Activated CD4-positive, alpha-beta memory T cell treated with anti-CD3 and anti-CD28 coated beads for 36 hours (primary cell): ENCODE measurements at regions of chrX and their contacts with region 1.

Region 1: GRCh38 chrX:129781134-129781672 is 1.5 kb downstream of the SASH3 start:
- DNase-seq: peak; percentile 92
- H3K4me3 Mint-ChIP-seq: peak overlapping the region; percentile 79
- H3K27ac Mint-ChIP-seq: peak overlapping the region; percentile 97
- H3K4me1 Mint-ChIP-seq: peaks cover 53% of the 10 kb centered on the region
- H3K27me3 Mint-ChIP-seq: no peaks in the 10 kb centered on the region

Region 2: GRCh38 chrX:129754056-129755024 is 26.9 kb before region 1 on chrX:
- CTCF ChIA-PET with region 1: interaction called, 40 read pairs
- POLR2A ChIA-PET with region 1: interaction called, 58 read pairs
- intact Hi-C with region 1: loop called (anchors 1 kb)
- DNase-seq: peak; percentile 46
- H3K4me3 Mint-ChIP-seq: no peak overlapping the region
- H3K27ac Mint-ChIP-seq: no peak overlapping the region
- H3K4me1 Mint-ChIP-seq: peaks cover 39% of the 10 kb centered on the region
- H3K27me3 Mint-ChIP-seq: no peaks in the 10 kb centered on the region

Region 3: DNA sequence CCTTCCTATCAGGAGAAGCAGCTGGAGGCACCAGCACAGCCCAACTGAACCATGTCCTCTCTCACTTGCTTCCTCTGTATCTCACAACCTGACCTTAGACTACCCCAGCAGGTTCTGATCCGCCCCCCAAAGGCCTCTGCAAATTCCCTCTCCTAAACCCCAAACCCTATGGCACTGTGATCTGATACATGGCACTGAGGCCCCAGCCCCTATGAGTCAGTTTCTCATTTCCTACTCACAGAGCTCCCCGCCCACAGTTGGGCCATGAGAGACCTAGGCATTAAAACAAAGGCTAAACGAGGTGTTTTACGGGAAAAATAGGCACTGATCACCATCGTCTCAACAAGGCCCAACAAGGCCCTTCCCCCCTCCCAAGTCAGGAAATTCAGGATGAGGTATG is 17.7 kb after region 1 on chrX:
- CTCF ChIA-PET with region 1: no interaction called
- POLR2A ChIA-PET with region 1: interaction called, 8 read pairs
- intact Hi-C with region 1: loop called (anchors 2 kb)
- DNase-seq: peak; percentile 67
- H3K4me3 Mint-ChIP-seq: no peak overlapping the region
- H3K27ac Mint-ChIP-seq: peak overlapping the region; percentile 82
- H3K4me1 Mint-ChIP-seq: peaks cover 28% of the 10 kb centered on the region
- H3K27me3 Mint-ChIP-seq: no peaks in the 10 kb centered on the region

Region 4: DNA sequence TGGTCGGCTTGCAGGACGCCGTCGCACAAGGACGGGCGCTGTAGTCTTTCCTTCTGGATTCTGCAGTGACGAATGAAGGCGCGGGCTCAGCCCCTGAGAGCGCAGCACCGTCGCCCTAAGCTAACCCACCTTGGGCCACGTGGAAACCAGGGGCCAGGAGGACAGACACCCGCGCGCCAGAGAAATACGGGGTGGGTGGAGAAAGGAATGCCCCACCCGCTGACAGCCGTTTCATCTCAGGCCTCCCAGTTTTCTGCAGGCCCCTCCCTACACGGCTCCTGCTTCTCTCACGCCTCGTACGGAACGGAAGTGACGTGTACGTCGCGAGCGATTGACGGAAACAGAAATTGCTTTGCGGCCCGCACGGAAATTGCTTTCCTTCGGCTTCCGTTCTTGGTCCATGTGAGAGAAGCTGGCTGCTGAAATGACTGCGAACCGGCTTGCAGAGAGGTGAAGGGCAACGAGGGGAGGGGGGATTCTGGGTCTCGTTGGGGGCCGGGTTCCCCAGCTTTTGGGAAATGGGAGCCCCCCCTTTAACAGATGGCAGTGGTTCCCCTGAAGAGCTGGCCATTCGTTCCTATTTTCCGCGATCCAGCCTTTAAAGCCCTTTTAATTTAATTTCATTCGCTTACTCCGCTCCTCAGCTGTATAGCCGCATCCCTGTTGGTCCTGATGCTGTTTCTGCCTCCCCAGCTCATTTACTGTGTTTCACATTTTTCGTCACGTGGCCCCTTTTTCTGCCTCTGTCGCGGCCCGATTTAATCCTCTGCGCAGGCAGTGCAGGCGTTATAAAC is 124.8 kb after region 1 on chrX and contains the start of gene UTP14A:
- CTCF ChIA-PET with region 1: no interaction called
- POLR2A ChIA-PET with region 1: no interaction called
- intact Hi-C with region 1: loop called (anchors 2 kb)
- DNase-seq: peak; percentile 92
- H3K4me3 Mint-ChIP-seq: peak within 1 kb of the TSS; percentile 88
- H3K27ac Mint-ChIP-seq: peak within 1 kb of the TSS; percentile 88
- H3K4me1 Mint-ChIP-seq: peaks cover 23% of the 10 kb centered on the region
- H3K27me3 Mint-ChIP-seq: no peaks in the 10 kb centered on the region
- total RNA-seq, gene UTP14A: 29.9 to 31.7 TPM

Region 5: GRCh38 chrX:129982274-129983251 is 201.4 kb after region 1 on chrX and contains the start of gene BCORL1:
- CTCF ChIA-PET with region 1: no interaction called
- POLR2A ChIA-PET with region 1: no interaction called
- intact Hi-C with region 1: loop called (anchors 5 kb)
- DNase-seq: peak; percentile 93
- H3K4me3 Mint-ChIP-seq: no peak within 1 kb of the TSS
- H3K27ac Mint-ChIP-seq: no peak within 1 kb of the TSS
- H3K4me1 Mint-ChIP-seq: peaks cover 17% of the 10 kb centered on the region
- H3K27me3 Mint-ChIP-seq: no peaks in the 10 kb centered on the region
- total RNA-seq, gene BCORL1: 9.2 to 10.5 TPM

Region 6: GRCh38 chrX:130165703-130166502 is 384.7 kb after region 1 on chrX and contains the start of gene AIFM1:
- CTCF ChIA-PET with region 1: no interaction called
- POLR2A ChIA-PET with region 1: no interaction called
- intact Hi-C with region 1: loop called (anchors 5 kb)
- DNase-seq: peak; percentile 93
- H3K4me3 Mint-ChIP-seq: peak within 1 kb of the TSS; percentile 84
- H3K27ac Mint-ChIP-seq: peak within 1 kb of the TSS; percentile 95
- H3K4me1 Mint-ChIP-seq: peaks cover 34% of the 10 kb centered on the region
- H3K27me3 Mint-ChIP-seq: no peaks in the 10 kb centered on the region
- total RNA-seq, gene AIFM1: 60.9 to 61.2 TPM